ENCODE measurements at regions of chr17 and their contacts with region 1.

Region 1: DNA sequence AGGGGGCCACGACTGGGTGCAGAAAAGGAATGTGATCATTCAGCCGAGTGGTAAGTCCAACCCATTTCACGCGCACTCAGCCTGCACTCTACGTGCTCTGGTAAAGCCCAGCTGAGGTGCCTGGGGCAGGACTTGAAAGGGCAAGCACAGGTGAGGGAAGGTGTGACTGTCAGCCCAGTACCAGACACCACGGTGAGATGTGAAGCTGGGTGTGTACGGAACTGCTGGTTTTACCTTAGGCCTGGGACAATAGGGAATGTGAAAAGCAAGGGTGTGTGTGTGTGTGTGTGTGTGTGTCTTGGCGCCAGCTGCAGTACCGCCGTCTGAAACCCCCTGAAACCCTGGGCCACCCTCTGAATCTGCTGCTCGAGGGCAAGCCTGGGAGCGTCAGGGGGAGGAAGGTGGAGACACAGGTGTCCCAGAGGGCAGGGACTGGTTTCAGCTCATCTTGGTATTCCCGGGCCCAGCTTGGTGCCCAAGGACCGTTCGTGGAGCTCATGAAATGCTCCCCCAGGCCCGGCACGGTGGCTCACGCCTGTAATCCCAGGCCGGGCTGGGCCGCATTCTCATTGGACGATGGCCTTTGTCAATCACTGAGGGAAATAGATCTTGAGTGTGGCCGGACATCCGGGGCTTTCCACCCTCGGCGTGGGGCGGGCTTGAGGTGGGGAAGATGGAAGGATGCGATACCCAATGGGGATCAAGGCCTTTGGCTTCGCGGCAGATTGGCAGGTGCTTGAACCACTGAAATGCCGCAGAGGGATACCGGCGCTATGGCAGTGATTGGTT is 27.8 kb upstream of the ST6GALNAC1 start:
- DNase-seq: peak; percentile 100
- H3K4me3 Mint-ChIP-seq: peak overlapping the region; percentile 90
- H3K27ac Mint-ChIP-seq: peak overlapping the region; percentile 93
- H3K4me1 Mint-ChIP-seq: peaks cover 24% of the 10 kb centered on the region
- H3K27me3 Mint-ChIP-seq: no peaks in the 10 kb centered on the region

Region 2: DNA sequence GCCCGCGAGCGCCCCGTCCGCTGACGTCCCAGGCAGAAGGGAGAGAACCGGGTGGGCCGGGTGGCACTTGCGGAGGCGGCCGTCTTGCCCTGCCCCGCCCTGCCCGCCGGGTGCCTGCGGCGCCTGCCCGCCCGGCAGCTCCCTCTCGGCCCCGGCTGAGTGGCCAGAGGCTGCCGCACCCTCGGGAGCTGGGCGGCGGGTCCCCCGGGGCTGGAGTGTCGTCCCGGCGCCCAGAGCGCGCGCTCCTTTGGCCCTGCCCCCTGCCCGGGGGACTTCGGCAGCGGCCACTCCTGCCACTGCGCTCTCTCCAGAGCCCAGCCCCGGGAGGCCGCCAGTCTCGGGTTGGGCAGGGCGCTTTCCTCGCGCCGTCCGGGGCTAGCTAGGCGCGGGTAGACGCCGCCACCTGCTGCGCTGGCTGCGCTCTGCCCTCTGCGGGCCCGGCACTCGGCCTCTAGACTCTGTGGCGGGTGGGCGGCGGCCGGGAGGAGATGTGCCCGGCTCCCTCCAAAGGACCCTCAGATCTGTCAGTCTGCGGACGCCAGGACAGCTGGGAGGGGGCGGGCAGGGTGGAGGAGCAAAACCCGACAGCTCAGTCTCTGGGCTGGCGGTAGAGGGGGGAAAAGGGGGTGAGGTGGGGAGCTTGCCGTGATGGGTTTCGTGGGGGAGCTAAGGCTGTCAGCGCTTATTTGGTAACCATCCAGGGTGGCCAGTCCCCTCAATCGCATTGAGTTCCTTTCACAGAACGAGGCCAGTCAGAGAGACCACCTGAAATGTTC is 85.3 kb before region 1 on chr17 and contains the start of gene ST6GALNAC2:
- CTCF ChIA-PET with region 1: no interaction called
- POLR2A ChIA-PET with region 1: no interaction called
- intact Hi-C with region 1: no loop called
- DNase-seq: peak; percentile 53
- H3K4me3 Mint-ChIP-seq: peak within 1 kb of the TSS; percentile 57
- H3K27ac Mint-ChIP-seq: no peak within 1 kb of the TSS
- H3K4me1 Mint-ChIP-seq: peaks cover 13% of the 10 kb centered on the region
- H3K27me3 Mint-ChIP-seq: peaks cover 46% of the 10 kb centered on the region
- total RNA-seq, gene ST6GALNAC2: 0.19 to 0.51 TPM

Region 3: DNA sequence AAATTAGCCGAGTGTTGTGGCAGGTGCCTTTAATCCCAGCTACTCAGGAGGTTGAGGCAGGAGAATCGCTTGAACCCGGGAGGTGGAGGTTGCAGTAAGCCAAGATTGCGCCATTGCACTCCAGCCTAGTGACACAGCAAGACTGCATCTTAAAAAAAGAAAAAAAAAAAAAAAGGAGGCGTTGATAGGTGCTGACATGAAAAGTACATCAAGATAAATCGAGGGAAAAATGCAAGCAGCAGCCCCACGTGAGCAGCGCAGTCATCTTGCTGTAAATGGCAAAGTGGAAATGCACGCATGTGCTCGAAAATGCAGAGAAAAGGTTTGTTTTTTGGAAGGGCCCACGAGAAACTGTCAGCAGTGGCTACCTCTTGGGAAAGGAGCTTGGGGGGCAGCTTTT is 18.5 kb after region 1 on chr17:
- CTCF ChIA-PET with region 1: no interaction called
- POLR2A ChIA-PET with region 1: no interaction called
- intact Hi-C with region 1: no loop called
- DNase-seq: no peak
- H3K4me3 Mint-ChIP-seq: no peak overlapping the region
- H3K27ac Mint-ChIP-seq: no peak overlapping the region
- H3K4me1 Mint-ChIP-seq: no peaks in the 10 kb centered on the region
- H3K27me3 Mint-ChIP-seq: peaks cover 1% of the 10 kb centered on the region

Region 4: DNA sequence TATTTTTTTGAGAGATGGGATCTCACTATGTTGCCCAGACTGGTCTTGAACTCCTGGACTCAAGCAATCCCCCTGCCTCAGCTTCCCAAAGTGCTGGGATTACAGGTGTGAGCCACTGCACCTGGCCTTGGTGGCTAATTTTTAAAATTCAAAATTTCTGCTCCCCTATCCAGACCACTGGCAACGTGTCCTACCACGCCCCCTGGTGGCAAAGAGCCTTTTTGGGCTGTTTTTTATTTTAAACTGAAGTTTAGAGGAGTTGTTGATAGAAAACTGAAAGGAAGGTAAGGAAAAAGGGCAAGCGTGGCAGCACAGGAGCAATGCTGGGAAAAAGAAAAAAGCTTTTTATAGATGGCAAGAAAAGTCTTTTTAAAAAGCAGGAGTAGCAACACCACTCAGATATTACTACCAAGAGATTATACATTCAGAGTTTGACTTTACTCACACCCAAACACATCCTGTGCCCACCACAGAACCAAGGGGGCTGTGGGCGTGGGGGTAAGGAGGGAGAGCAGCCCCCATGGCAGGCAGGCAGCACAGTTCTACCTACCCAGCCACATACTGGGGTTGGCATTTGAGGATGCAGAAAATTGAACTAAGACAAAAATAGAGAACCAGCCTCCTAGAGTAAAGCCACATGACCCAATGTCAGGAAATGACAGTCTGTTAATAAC is 43.6 kb after region 1 on chr17:
- CTCF ChIA-PET with region 1: interaction called, 16 read pairs
- POLR2A ChIA-PET with region 1: no interaction called
- intact Hi-C with region 1: loop called (anchors 2 kb)
- DNase-seq: peak; percentile 79
- H3K4me3 Mint-ChIP-seq: no peak overlapping the region
- H3K27ac Mint-ChIP-seq: peak overlapping the region; percentile 24
- H3K4me1 Mint-ChIP-seq: peaks cover 29% of the 10 kb centered on the region
- H3K27me3 Mint-ChIP-seq: no peaks in the 10 kb centered on the region